Psoas muscle (tissue), 8 donors: ENCODE measurements at regions of chr5 and their contacts with region 1.

Region 1: GRCh38 chr5:81425569-81425968 is 31.6 kb upstream of the ACOT12 start:
- DNase-seq: no peak
- ATAC-seq: peak in 3 of 4 donors; percentile 52 to 73 (median 56)
- H3K4me3 ChIP-seq: no peak overlapping the region
- H3K27ac ChIP-seq: peak overlapping the region; percentile 14
- H3K4me1 ChIP-seq: peaks cover 20% of the 10 kb centered on the region
- H3K27me3 ChIP-seq: no peaks in the 10 kb centered on the region
- CTCF ChIP-seq: peak; percentile 75

Region 2: GRCh38 chr5:81482595-81482994 is 57.0 kb after region 1 on chr5:
- intact Hi-C with region 1: loop called in 1 of 2 experiments (anchors 2 kb)
- DNase-seq: no peak
- ATAC-seq: no peak
- H3K4me3 ChIP-seq: no peak overlapping the region
- H3K27ac ChIP-seq: no peak overlapping the region
- H3K4me1 ChIP-seq: no peaks in the 10 kb centered on the region
- H3K27me3 ChIP-seq: no peaks in the 10 kb centered on the region
- CTCF ChIP-seq: no peak

Region 3: DNA sequence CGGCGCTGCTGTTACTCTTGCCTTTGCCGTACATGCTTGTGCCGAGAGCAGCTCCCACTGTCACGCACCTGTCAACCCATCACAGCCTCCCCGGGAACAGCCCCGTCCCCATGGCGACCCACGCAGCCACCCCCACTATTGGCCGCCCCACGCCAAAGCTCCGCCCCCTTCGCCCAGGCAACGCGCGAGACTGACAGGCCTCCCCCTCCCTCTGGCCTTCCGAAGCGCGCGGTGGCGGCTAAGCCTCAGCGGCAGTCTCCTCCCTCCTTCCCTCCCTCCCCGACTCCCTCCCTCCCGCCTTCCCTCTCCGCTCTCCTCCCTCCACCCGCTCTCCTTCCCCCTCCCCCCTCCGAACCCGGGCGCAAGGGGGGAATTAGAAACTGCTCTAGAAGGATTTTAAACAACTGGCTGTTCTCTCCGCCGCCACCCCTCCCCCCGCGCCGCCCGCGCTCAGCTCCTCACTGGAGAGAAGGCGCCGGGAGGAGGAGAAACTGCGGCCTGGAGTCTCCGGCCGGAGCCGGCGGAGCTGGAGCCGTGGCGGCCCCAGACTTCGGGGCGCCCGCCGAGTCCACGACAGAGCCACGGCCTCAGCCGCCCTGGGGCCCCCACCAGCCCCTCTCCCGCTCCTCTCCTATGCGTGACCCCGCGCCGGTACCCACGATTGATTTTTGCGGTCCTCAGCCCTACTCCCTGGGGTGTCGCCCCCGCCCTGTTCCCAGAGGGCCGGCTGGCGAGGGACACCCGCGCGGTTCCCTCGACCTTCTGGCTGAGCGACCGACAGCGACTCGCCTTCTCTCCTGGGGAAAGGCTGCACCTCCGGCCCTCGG is 325.7 kb after region 1 on chr5 and contains the start of gene SSBP2:
- intact Hi-C with region 1: loop called (anchors 10 kb)
- DNase-seq: peak; percentile 100
- ATAC-seq: peak; percentile 90 to 95 (median 93)
- H3K4me3 ChIP-seq: peak within 1 kb of the TSS; percentile 86
- H3K27ac ChIP-seq: peak within 1 kb of the TSS; percentile 95
- H3K4me1 ChIP-seq: peaks cover 48% of the 10 kb centered on the region
- H3K27me3 ChIP-seq: no peaks in the 10 kb centered on the region
- CTCF ChIP-seq: no peak
- total RNA-seq, gene SSBP2: 25.3 to 42.6 (median 34.6) TPM

Region 4: DNA sequence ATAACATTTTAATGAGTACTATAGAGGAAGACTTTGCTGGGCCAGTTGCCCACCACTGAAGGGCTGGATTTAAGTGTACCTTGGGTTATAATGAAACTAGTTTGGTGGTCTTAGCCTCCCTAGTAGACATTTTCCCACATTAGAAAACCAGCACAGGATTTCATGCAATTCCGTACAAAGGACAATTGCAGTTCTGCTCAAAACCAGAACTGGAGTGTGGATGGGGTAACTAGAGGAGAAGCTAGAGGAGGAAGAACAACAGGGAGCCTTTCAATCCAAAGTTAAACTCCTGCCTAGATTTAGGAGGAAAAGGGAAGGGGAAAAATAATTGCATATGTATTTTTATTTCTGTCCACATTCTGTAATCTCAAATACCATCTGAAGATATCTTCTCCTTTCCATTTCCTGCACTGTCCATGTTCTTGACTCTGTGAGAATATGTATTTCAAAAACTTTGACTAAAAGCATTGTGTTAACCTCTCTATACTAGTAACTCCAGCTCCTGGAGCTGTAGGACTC is 422.9 kb after region 1 on chr5:
- intact Hi-C with region 1: no loop called
- DNase-seq: no peak
- ATAC-seq: no peak
- H3K4me3 ChIP-seq: no peak overlapping the region
- H3K27ac ChIP-seq: no peak overlapping the region
- H3K4me1 ChIP-seq: peaks cover 43% of the 10 kb centered on the region
- H3K27me3 ChIP-seq: no peaks in the 10 kb centered on the region
- CTCF ChIP-seq: no peak

Region 5: GRCh38 chr5:81884871-81885270 is 459.3 kb after region 1 on chr5:
- intact Hi-C with region 1: loop called (anchors 10 kb)
- DNase-seq: no peak
- ATAC-seq: peak; percentile 36 to 90 (median 71)
- H3K4me3 ChIP-seq: no peak overlapping the region
- H3K27ac ChIP-seq: no peak overlapping the region
- H3K4me1 ChIP-seq: no peaks in the 10 kb centered on the region
- H3K27me3 ChIP-seq: no peaks in the 10 kb centered on the region
- CTCF ChIP-seq: peak; percentile 33

Region 6: GRCh38 chr5:81980598-81981260 is 555.2 kb after region 1 on chr5:
- intact Hi-C with region 1: loop called in 1 of 2 experiments (anchors 10 kb)
- DNase-seq: no peak
- ATAC-seq: no peak
- H3K4me3 ChIP-seq: no peak overlapping the region
- H3K27ac ChIP-seq: no peak overlapping the region
- H3K4me1 ChIP-seq: no peaks in the 10 kb centered on the region
- H3K27me3 ChIP-seq: no peaks in the 10 kb centered on the region
- CTCF ChIP-seq: no peak

Region 7: DNA sequence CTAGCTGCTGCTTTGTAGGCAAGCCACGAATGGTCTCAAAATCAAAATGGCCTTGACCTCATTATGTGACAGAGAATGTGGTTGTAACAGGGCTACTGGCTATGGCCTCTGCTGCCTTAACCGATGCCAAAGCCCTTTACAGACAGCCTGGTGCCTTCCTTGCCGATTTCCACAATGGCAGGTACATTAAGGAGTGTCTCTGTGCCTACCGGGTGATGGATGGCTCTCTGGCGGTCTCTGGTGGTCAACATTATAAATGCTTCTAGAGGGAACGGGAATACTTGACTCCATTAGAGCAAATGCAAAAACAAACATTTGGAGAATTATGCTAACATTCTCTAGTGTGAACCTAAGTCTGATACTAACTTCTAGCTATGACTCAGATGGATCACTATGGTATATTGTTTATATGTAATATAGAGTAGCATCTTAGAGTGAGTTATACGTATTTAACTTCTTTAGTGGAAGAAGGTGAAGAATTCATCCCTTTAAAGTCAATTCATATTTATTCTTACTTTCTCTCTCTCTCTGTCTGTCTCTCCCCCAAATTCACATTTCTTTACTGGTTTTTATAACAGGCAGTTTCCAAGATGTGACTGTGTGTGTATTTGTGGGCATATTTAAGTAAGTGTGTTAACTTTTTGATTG is 800.1 kb after region 1 on chr5:
- intact Hi-C with region 1: loop called (anchors 5 to 10 kb)
- DNase-seq: peak in 1 of 2 donors; percentile 60
- ATAC-seq: peak; percentile 69 to 93 (median 85)
- H3K4me3 ChIP-seq: no peak overlapping the region
- H3K27ac ChIP-seq: no peak overlapping the region
- H3K4me1 ChIP-seq: peaks cover 5% of the 10 kb centered on the region
- H3K27me3 ChIP-seq: no peaks in the 10 kb centered on the region
- CTCF ChIP-seq: peak; percentile 85